CD4-positive, alpha-beta memory T cell (primary cell): ENCODE measurements at regions of chr7 and their contacts with region 1.

Region 1: GRCh38 chr7:74417419-74417971 is 36.2 kb upstream of the GTF2IRD1 start:
- DNase-seq: peak in 4 of 5 donors; percentile 39 to 56 (median 42)
- H3K4me3 ChIP-seq: no peak overlapping the region
- H3K4me3 Mint-ChIP-seq: no peak overlapping the region
- H3K27ac ChIP-seq: no peak overlapping the region
- H3K27ac Mint-ChIP-seq: no peak overlapping the region
- H3K4me1 ChIP-seq: no peaks in the 10 kb centered on the region
- H3K4me1 Mint-ChIP-seq: peaks cover 0 to 6% (median under 1%) of the 10 kb centered on the region in 4 donors
- H3K27me3 ChIP-seq: no peaks in the 10 kb centered on the region
- H3K27me3 Mint-ChIP-seq: no peaks in the 10 kb centered on the region

Region 2: DNA sequence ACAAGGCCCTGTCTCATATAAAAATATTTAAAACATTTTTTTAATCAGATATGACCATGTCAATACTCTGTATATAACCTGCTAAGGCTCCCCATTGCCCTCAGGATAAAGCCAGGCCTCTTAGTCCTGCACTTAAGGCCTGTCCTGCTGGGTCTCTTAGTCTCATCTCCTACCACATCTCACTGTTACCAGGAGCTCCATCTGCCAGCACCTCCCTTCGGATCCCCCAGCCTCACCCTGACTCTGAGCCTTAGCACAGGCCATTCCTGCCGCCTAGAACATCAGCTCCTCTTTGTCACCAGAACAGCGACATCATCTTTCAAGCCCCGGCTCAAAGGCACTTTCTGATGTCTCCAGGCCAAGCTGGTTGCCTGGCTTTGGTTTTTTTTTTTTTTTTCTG is 10.5 kb after region 1 on chr7:
- CTCF ChIA-PET with region 1: interaction called, 17 read pairs
- POLR2A ChIA-PET with region 1: no interaction called
- intact Hi-C with region 1: no loop called
- DNase-seq: no peak
- H3K4me3 ChIP-seq: no peak overlapping the region
- H3K4me3 Mint-ChIP-seq: no peak overlapping the region
- H3K27ac ChIP-seq: no peak overlapping the region
- H3K27ac Mint-ChIP-seq: no peak overlapping the region
- H3K4me1 ChIP-seq: no peaks in the 10 kb centered on the region
- H3K4me1 Mint-ChIP-seq: no peaks in the 10 kb centered on the region
- H3K27me3 ChIP-seq: no peaks in the 10 kb centered on the region
- H3K27me3 Mint-ChIP-seq: peaks cover 0 to 2% of the 10 kb centered on the region in 2 donors

Region 3: DNA sequence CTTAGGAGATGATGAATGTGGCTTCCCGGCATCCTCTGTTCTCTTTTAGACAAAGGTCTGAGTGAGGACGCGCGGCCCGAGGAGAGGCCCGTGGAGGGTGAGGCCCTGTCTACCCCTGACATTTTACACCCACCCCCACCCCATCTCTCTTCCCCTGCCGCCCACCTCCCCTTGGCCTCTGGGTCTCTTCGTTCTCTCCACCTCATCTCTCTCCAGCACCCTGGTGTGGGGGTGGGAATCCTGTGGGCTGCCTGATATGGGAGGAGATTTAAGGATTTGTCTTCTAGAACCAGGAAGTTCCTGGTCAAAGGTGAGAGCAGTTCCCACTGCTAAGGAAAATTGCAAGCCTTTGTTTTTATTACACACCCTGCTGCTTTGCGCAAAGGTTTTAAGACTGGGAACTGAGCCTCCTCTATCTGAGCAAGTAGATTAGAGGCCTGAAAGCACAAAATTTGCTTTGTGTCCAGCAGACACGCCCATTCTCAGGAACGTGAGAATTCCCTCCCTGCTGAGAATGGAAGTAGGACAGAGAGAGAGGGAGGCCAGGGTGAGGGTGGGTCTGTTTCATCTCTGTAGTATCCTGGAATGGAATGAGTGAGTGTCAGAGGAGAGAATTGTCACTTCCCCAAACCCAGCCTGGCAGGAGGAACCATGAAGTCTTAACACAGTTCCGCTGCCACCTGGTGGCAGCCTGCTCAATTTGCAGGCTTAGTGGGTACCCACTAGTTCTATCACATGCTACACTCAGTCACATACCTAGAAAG is 127.4 kb after region 1 on chr7:
- CTCF ChIA-PET with region 1: interaction called, 5 read pairs
- POLR2A ChIA-PET with region 1: no interaction called
- intact Hi-C with region 1: loop called (anchors 5 kb)
- DNase-seq: no peak
- H3K4me3 ChIP-seq: no peak overlapping the region
- H3K4me3 Mint-ChIP-seq: no peak overlapping the region
- H3K27ac ChIP-seq: no peak overlapping the region
- H3K27ac Mint-ChIP-seq: peak overlapping the region in 1 of 7 donors; percentile 68
- H3K4me1 ChIP-seq: no peaks in the 10 kb centered on the region
- H3K4me1 Mint-ChIP-seq: no peaks in the 10 kb centered on the region
- H3K27me3 ChIP-seq: no peaks in the 10 kb centered on the region
- H3K27me3 Mint-ChIP-seq: no peaks in the 10 kb centered on the region

Region 4: GRCh38 chr7:74569501-74570075 is 152.1 kb after region 1 on chr7:
- CTCF ChIA-PET with region 1: interaction called, 41 read pairs
- POLR2A ChIA-PET with region 1: no interaction called
- intact Hi-C with region 1: loop called (anchors 2 kb)
- DNase-seq: peak; percentile 36 to 66 (median 51)
- H3K4me3 ChIP-seq: no peak overlapping the region
- H3K4me3 Mint-ChIP-seq: peak overlapping the region; percentile 25 to 85 (median 74)
- H3K27ac ChIP-seq: no peak overlapping the region
- H3K27ac Mint-ChIP-seq: peak overlapping the region; percentile 85 to 97 (median 95)
- H3K4me1 ChIP-seq: peaks cover 11% of the 10 kb centered on the region
- H3K4me1 Mint-ChIP-seq: peaks cover 6 to 19% (median 14%) of the 10 kb centered on the region in 4 donors
- H3K27me3 ChIP-seq: no peaks in the 10 kb centered on the region
- H3K27me3 Mint-ChIP-seq: no peaks in the 10 kb centered on the region

Region 5: DNA sequence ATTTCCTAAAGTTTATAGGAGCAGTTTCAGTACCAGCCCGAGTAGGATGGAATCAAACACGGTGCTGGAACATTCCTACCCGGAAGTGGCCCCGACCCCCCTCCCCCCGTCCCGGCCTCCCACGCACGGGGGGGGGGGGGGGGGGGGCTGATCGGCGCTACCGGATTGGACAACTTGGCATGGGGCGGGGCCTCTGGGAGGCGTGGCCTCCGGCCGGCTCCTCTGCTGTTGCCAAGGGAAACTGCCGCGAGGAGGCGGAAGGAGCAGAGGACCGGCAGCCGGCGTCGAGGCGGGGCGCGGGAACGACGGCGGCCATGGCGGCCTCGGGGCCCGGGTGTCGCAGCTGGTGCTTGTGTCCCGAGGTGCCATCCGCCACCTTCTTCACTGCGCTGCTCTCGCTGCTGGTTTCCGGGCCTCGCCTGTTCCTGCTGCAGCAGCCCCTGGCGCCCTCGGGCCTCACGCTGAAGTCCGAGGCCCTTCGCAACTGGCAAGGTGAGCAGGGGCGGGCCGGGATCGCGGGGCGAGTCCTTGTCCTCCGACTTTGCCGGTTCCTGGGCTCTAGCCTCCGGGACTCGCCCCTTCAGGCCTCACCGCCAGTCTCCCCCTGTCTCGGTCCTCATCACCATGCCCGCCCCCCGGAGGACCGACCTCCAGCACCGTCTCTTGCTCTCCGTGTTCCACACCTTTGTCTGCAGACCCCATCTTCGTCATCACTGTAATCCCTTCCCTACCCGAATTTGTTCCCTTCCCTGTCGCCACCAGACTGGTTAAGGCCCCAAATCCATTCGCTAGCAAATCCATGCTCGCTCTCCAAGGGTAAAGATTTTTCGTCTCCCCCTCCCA is 1461.5 kb after region 1 on chr7 and contains the start of gene RHBDD2:
- CTCF ChIA-PET with region 1: no interaction called
- POLR2A ChIA-PET with region 1: no interaction called
- intact Hi-C with region 1: no loop called
- DNase-seq: peak; percentile 90 to 96 (median 93)
- H3K4me3 ChIP-seq: peak within 1 kb of the TSS; percentile 89 to 94
- H3K4me3 Mint-ChIP-seq: peak within 1 kb of the TSS; percentile 91 to 99 (median 98)
- H3K27ac ChIP-seq: peak within 1 kb of the TSS; percentile 91
- H3K27ac Mint-ChIP-seq: peak within 1 kb of the TSS; percentile 96 to 100 (median 98)
- H3K4me1 ChIP-seq: peaks cover 25% of the 10 kb centered on the region
- H3K4me1 Mint-ChIP-seq: peaks cover 23 to 39% (median 32%) of the 10 kb centered on the region in 4 donors
- H3K27me3 ChIP-seq: no peaks in the 10 kb centered on the region
- H3K27me3 Mint-ChIP-seq: no peaks in the 10 kb centered on the region
- total RNA-seq, gene RHBDD2: 47.1 to 53.2 TPM